ENCODE measurements at regions of chr9 and their contacts with region 1.

Region 1: GRCh38 chr9:131590908-131591844 is 45.9 kb downstream of the PRRT1B start:
- DNase-seq: peak; percentile 85
- H3K4me3 Mint-ChIP-seq: no peak overlapping the region
- H3K27ac Mint-ChIP-seq: peak overlapping the region; percentile 90
- H3K4me1 Mint-ChIP-seq: peaks cover 39% of the 10 kb centered on the region
- H3K27me3 Mint-ChIP-seq: no peaks in the 10 kb centered on the region

Region 2: DNA sequence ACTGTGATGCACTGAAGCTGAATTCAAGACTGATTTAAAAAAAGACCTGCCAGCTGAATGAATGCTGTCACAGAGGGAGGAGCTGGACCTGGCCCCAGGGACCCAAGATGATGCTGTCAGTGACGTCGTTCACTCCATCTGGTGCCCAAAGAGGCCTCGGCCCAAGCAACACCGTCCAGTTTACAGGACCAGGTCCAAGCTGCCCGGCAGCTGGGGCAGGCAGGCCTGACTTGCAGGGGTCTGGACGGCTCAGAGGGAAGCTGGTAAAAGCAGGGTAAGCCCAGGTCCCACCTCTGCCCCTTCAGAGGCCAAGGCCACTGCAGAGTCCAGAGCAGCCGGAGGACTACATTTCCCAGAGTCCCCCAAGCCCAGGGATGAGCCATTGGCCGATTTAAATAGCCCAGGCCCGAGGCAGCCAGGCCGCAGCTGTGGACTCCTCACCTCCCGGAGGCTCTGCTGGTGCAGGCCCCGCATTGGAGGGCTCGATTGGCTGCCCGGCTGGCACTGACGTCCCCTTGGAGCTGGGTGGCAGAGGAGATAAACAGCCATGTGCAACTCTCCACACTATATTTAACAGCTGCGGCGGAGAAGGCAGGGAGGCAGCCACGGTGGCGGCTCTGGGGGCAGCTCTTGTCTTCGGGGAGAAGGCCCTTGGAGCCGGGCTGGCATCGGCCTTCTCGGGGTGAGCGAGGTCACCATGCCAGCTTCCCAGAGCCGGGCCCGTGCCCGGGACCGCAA is 301.7 kb before region 1 on chr9 and contains the start of gene PLPP7:
- CTCF ChIA-PET with region 1: no interaction called
- DNase-seq: no peak
- H3K4me3 Mint-ChIP-seq: no peak within 1 kb of the TSS
- H3K27ac Mint-ChIP-seq: no peak within 1 kb of the TSS
- H3K4me1 Mint-ChIP-seq: no peaks in the 10 kb centered on the region
- H3K27me3 Mint-ChIP-seq: peaks cover 39% of the 10 kb centered on the region

Region 3: DNA sequence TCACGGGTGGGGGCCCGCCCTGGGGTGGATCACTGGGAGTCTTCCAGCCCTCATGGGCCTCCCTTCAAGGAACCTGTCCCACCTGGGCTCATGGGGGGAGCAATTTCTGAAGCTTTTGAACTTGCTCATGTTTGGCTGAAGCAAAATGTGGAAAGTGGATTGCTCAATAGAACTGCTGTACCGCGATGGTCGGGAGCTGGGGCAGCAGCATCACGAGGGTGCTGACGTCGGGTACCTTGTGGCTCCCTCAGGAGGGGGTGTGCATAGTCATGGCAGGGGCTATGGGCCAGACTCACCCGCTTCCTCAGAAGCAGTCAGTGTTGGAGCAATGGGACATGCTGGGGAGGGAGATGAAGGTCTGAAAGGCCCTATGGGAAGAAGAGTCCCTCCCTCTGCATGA is 12.0 kb after region 1 on chr9:
- CTCF ChIA-PET with region 1: interaction called, 16 read pairs
- DNase-seq: no peak
- H3K4me3 Mint-ChIP-seq: no peak overlapping the region
- H3K27ac Mint-ChIP-seq: peak overlapping the region; percentile 24
- H3K4me1 Mint-ChIP-seq: no peaks in the 10 kb centered on the region
- H3K27me3 Mint-ChIP-seq: no peaks in the 10 kb centered on the region

Region 4: DNA sequence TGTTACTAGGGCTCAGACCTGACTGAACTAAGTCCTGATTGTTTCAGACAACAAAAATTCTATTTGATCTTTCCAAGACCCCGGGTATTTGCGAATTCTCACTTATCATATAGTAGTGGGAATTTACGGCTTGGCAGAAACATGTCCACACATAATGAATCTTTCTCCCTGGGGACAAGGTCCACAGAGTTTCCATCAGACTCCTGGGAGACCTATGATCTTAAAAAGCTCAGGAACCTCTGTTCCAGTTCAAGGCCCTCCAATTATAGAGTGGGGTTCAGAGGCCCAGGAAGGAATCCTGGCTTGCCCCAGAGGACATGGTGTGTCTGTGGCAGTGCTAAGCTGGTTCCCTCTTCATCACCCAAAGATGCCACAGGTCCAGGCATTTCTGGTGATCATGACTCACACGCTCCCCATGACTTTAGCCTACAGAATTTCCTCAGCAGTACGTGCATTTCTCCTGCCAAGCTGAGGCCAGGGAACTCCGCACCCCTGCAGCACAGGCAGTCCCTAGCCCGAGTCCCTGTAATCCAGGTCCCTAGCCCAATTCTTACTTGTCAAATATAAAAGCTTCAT is 136.1 kb after region 1 on chr9:
- CTCF ChIA-PET with region 1: interaction called, 30 read pairs
- DNase-seq: no peak
- H3K4me3 Mint-ChIP-seq: peak overlapping the region; percentile 56
- H3K27ac Mint-ChIP-seq: peak overlapping the region; percentile 97
- H3K4me1 Mint-ChIP-seq: peaks cover 85% of the 10 kb centered on the region
- H3K27me3 Mint-ChIP-seq: no peaks in the 10 kb centered on the region

Region 5: DNA sequence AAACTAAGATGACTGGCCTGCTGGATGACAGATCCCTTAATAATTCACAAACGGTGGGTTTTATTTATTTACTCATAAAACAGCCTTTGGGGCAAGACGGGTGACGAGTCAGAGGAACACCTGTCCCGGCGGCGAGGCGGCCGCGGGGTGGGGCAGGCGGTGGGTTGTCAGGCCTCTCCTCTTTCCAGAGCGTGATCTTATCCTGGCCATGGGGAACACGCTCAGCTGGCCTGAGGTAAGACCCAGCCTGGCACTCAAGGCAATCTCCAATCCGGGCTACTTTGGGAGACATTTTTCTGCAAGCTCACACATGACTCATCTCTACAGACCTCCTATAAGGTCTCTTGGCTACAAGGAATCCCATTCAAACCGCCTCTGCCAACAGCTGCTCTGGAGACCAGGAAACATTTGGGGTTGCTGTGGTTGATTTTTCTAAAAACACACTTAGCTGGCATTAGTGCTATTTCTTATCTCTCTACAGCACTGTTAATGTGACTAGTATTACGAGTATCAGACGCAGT is 142.4 kb after region 1 on chr9:
- CTCF ChIA-PET with region 1: interaction called, 148 read pairs
- DNase-seq: peak; percentile 53
- H3K4me3 Mint-ChIP-seq: peak overlapping the region; percentile 59
- H3K27ac Mint-ChIP-seq: peak overlapping the region; percentile 97
- H3K4me1 Mint-ChIP-seq: peaks cover 93% of the 10 kb centered on the region
- H3K27me3 Mint-ChIP-seq: no peaks in the 10 kb centered on the region

Region 6: DNA sequence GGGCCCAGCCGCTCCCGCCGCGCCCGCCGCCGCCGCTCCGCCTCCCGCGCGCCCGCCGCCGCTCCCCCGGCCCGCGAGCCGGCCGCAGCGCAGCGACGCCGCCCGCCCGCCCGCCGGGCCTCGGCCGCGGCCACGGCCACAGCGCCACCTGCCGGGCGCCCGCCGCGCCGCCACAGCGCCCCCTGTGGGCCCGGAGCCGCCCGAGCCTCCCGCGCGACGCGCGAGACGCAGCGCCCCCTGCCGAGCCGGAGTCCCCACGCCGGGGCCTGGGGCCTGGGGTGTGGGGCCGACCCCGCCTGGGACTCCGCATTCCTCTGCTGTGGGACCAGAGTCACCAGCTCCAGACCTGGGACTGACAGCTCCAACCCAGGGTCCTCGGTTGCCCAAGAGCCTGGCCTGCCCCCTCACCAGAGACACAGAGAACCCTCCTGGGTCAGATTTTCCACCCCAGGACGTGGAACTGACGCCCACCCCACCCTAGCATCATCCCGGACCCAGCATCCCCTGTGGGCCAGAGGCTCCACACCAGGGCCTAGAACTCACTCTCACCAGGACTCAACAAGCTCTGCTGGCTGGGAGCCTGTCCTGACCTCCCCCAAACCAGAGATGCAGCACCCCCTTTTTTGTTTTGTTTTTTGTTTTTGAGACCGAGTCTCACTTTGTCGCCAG is 148.9 kb after region 1 on chr9 and contains the start of gene RAPGEF1:
- CTCF ChIA-PET with region 1: interaction called, 148 read pairs
- DNase-seq: peak; percentile 80
- H3K4me3 Mint-ChIP-seq: peak within 1 kb of the TSS; percentile 88
- H3K27ac Mint-ChIP-seq: peak within 1 kb of the TSS; percentile 87
- H3K4me1 Mint-ChIP-seq: peaks cover 67% of the 10 kb centered on the region
- H3K27me3 Mint-ChIP-seq: no peaks in the 10 kb centered on the region

Measured in activated naive CD4-positive, alpha-beta T cell treated with anti-CD3 and anti-CD28 coated beads, Interleukin-2, amount 10 ng/mL, durations not matched to agents 7 days and 5 days (primary cell).